OCI-LY7 (cell line): ENCODE measurements at regions of chr13 and their contacts with region 1.

Region 1: GRCh38 chr13:43240278-43240677 is 216.9 kb downstream of the DNAJC15 start:
- DNase-seq: peak; percentile 60
- H3K4me3 ChIP-seq: peak overlapping the region; percentile 33
- H3K27ac ChIP-seq: peak overlapping the region; percentile 66
- H3K4me1 ChIP-seq: peaks cover 27% of the 10 kb centered on the region
- CTCF ChIP-seq: no peak

Region 2: DNA sequence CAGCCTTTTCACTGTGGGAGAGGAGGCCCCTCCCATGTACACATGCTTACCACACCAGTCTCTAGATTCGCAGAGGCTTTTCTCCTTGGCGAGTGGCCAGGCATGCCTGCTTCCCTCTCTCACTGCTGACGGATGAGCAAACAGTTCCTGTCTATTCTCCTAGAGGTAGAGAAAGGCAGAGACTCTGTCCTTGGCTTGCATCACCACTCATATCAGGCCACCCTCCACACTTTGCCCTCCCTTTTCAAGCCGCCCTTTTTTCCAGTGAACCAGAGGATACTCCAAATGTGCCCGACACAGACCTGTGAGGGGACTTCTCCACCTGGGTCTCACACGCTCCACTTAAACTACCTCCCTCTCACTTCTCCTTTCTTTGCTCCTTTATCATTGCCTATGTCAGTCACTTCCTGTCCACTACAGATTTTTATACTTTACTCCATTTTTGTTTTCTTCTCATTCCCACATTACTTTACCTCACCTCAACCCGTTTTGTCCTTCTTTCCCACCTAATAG is 67.7 kb after region 1 on chr13:
- CTCF ChIA-PET with region 1: no interaction called
- POLR2A ChIA-PET with region 1: no interaction called
- intact Hi-C with region 1: loop called (anchors 5 kb)
- DNase-seq: peak; percentile 54
- H3K4me3 ChIP-seq: no peak overlapping the region
- H3K27ac ChIP-seq: no peak overlapping the region
- H3K4me1 ChIP-seq: peaks cover 16% of the 10 kb centered on the region
- CTCF ChIP-seq: no peak

Region 3: DNA sequence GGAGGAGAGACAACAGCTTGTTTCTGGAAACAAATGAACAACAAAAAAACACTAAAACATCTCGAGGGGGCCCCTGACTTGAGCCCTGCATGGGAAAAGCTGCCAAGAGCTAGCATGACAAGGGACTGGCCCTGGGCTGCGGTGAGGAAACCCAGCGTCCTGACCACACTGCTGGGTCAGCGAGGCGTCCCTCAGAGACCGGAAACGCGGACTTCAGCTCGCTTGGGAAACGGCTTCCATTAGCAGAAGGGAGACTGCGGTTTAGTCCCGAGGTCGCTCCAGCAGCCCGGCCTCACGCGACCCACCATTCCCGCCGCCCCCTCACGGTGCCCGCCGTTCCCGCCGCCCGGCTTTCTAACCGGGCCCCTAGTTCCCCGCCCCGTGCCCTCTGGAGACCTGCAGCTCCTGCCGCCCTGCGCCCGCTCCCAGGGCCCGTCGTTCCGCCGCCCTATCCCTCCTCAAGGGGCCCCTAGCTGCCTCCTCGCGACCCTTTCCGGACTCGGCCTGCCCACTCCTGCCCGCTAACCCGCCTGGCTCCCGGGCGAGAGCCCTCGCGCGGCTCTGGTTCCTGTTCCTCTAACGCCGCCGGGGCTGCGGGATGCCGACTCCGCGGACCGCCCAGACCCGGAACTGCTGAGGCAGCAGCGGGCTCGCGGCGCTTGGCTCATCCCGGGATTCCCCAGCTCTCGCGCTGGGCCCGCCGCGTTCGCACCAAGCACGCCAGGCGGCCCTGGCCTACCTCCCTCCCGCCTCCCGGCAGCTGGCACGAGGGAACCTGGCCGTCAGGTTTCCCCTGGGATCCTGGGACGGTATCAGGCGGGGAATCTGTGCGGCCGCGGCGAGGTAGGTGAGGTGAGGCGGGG is 638.8 kb after region 1 on chr13 and contains the start of gene CCDC122:
- CTCF ChIA-PET with region 1: no interaction called
- POLR2A ChIA-PET with region 1: no interaction called
- intact Hi-C with region 1: loop called (anchors 5 kb)
- DNase-seq: peak; percentile 78
- H3K4me3 ChIP-seq: peak within 1 kb of the TSS; percentile 84
- H3K27ac ChIP-seq: peak within 1 kb of the TSS; percentile 48
- H3K4me1 ChIP-seq: peaks cover 42% of the 10 kb centered on the region
- CTCF ChIP-seq: no peak
- total RNA-seq, gene CCDC122: 4.0 and 4.6 TPM in 2 replicates